PC-3 (cell line): ENCODE measurements at regions of chr17 and their contacts with region 1.

Region 1: DNA sequence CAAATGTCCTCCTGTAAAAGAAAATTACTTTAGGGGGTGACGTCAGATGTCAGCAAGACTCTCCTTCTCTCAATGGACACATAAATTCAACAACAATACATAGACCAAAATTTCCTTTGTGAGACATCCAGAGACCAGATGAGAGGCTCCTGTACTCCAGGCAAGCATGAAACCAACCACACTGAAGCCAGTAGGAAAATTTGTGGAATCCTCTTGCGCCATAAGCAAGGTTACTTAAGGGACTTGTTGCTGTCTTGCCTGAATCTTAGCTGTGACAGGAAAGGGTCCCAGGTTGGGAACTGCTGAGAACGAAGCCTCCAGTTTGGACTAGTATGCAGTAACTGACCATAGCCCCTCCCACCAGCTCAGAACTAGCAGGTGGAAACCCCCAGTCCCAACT is 56.0 kb downstream of the CEP112 start:
- DNase-seq: no peak
- ATAC-seq: no peak
- H3K4me3 ChIP-seq: no peak overlapping the region
- H3K27ac ChIP-seq: no peak overlapping the region
- H3K4me1 ChIP-seq: no peaks in the 10 kb centered on the region
- H3K27me3 ChIP-seq: no peaks in the 10 kb centered on the region
- CTCF ChIP-seq: no peak

Region 2: GRCh38 chr17:66123163-66123562 is 12.7 kb before region 1 on chr17:
- CTCF ChIA-PET with region 1: no interaction called
- POLR2A ChIA-PET with region 1: interaction called, 23 read pairs
- intact Hi-C with region 1: no loop called
- DNase-seq: peak; percentile 52
- ATAC-seq: no peak
- H3K4me3 ChIP-seq: no peak overlapping the region
- H3K27ac ChIP-seq: no peak overlapping the region
- H3K4me1 ChIP-seq: no peaks in the 10 kb centered on the region
- H3K27me3 ChIP-seq: no peaks in the 10 kb centered on the region
- CTCF ChIP-seq: no peak

Region 3: DNA sequence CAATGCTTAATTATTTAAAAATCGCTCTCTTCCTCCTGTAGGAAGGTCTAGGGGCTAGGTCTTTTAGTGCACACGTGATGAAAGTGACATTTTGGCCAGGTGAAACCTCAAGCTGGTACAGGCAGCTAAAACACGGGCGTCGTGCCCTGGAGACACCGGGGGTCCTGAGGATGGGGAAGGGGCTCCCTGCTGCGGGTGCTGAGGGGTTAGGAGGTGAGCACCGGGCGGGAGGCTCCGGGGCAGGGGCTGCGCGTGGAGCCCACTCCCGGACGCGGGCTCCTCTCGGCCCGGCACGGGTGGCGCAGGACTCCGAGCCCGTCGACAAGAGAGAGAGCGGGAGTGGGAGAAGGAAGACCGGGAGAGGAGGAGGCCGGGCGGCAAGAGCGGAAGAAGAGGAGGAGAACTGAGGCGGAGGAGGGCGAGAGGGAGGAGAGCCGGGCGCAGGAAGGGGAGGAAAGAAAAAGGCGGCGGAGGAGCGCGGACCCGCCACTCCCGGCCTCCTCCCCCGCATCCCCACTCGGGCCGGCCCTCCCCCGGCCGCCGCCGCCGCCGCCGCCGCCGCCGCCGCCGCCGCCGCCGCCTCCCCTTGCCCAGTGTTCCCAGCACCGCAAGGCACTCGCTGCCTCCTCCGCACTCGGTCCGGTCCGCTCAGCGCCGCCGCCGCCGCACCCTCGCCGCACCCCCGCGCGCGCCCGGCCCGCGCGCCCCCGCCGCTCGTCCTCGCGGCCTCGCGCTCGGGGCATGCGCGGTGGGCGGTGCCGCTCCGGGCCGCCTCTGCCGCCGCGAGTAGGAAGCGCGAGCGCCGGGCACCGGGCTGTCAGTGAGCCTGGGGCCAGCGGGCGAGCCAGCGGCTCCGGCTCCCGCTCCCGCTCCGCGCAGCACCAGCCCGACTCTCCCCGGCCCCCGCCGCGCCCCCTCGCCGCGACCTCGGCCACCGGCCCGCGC is 166.2 kb after region 1 on chr17 and contains the start of gene PRKCA:
- CTCF ChIA-PET with region 1: no interaction called
- POLR2A ChIA-PET with region 1: no interaction called
- intact Hi-C with region 1: no loop called
- DNase-seq: peak; percentile 87
- ATAC-seq: peak; percentile 78
- H3K4me3 ChIP-seq: peak within 1 kb of the TSS; percentile 94
- H3K27ac ChIP-seq: peak within 1 kb of the TSS; percentile 30
- H3K4me1 ChIP-seq: peaks cover 37% of the 10 kb centered on the region
- H3K27me3 ChIP-seq: no peaks in the 10 kb centered on the region
- CTCF ChIP-seq: no peak
- total RNA-seq, gene PRKCA: 22.6 and 28.2 TPM in 2 replicates